OCI-LY7 (cell line): ENCODE measurements at regions of chr10 and their contacts with region 1.

Region 1: GRCh38 chr10:87798082-87798481 is 19.9 kb downstream of the ATAD1 start:
- DNase-seq: no peak
- H3K4me3 ChIP-seq: no peak overlapping the region
- H3K27ac ChIP-seq: no peak overlapping the region
- H3K4me1 ChIP-seq: no peaks in the 10 kb centered on the region
- CTCF ChIP-seq: no peak

Region 2: GRCh38 chr10:87782721-87783120 is 15.4 kb before region 1 on chr10:
- CTCF ChIA-PET with region 1: no interaction called
- POLR2A ChIA-PET with region 1: interaction called, 10 read pairs
- intact Hi-C with region 1: no loop called
- DNase-seq: no peak
- H3K4me3 ChIP-seq: no peak overlapping the region
- H3K27ac ChIP-seq: no peak overlapping the region
- H3K4me1 ChIP-seq: no peaks in the 10 kb centered on the region
- CTCF ChIP-seq: no peak